Colonic mucosa (tissue), 4 donors: ENCODE measurements at regions of chr18 and their contacts with region 1.

Region 1: DNA sequence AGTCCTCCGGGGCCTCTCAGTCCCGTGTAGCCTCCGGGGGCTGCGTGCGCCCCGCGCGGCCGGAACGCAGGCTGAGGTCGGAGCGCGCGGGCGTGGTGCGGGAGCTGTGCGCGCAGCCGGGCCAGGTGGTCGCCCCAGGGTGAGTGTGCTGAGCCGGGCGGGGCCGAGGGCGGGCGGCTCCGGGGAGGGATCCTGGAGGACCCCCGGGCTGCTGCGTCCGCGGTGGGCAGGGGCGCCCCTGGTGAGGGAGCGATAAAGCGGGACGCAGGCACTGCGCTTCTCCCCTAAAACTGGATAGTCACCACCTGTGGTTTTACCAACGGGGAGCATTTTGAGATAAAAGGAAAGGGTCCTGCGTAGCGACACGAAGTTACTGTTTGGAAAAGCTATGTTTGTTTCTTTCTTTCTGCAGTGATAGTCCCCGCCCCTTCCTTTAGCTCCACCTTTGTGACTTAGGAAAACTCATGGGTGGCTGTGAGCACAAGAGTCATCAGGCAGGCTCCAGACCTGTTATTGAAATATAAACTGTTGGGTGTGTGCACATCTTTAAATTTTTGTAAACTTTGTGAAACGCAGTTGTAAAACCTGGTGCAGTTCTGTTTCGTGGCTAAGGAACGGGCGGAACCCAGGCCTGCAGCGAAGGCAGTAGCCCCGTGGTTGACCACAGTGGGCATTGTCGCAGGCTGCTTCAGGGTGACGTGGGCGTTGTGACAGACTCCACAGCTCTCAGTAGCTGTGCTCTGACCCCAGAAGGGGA is 698 bp downstream of the CTDP1 start:
- DNase-seq: peak; percentile 78
- H3K4me3 ChIP-seq: peak overlapping the region; percentile 99
- H3K27ac ChIP-seq: peak overlapping the region; percentile 85
- H3K4me1 ChIP-seq: peaks cover 22% of the 10 kb centered on the region
- H3K27me3 ChIP-seq: no peaks in the 10 kb centered on the region
- CTCF ChIP-seq: no peak

Region 2: DNA sequence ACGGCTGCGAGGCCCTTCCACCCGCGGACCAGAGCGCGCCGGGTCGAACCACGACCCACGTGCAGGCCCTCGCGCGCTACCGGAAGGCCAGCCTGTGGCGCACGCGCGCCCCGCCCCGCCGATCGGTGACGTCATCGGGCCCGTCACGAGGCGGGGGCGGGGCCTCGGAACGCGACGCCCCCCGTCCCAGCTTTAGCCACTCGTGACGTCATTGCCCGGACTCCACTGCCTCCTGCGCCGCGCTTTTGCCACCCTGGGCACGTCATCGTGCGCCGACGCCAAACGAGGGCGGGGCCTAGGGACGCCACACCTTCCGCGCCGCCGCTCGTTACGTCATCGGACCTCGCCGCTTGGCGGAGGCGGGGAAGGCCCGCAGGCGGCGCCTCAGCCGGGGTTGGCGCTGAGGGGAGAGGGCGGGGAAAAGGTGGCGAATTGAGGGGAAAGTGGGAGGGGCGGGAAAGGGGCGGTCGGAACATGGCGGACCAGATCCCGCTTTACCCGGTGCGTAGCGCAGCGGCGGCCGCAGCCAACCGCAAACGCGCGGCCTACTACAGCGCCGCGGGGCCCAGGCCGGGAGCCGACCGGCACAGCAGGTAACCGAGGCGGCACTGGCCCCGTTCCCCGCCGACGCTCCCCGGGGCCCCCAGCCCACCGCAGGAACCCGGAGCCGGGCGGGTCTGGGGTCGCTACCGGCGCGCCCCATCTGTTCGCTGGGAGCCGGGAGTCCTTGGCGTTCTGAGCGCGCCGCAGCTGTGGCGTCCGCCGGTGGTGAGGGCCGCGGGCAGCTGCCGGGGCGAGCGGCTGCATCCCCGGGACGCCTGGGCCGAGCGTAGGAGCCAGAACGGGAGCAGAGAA is 611.1 kb before region 1 on chr18 and contains the start of gene ATP9B:
- intact Hi-C with region 1: loop called (anchors 5 kb)
- DNase-seq: peak; percentile 96
- H3K4me3 ChIP-seq: peak within 1 kb of the TSS; percentile 99
- H3K27ac ChIP-seq: peak within 1 kb of the TSS; percentile 86
- H3K4me1 ChIP-seq: peaks cover 4% of the 10 kb centered on the region
- H3K27me3 ChIP-seq: no peaks in the 10 kb centered on the region
- CTCF ChIP-seq: no peak
- total RNA-seq, gene ATP9B: 20.4 to 30.3 TPM